ENCODE measurements at regions of chr6 and their contacts with region 1.

Region 1: DNA sequence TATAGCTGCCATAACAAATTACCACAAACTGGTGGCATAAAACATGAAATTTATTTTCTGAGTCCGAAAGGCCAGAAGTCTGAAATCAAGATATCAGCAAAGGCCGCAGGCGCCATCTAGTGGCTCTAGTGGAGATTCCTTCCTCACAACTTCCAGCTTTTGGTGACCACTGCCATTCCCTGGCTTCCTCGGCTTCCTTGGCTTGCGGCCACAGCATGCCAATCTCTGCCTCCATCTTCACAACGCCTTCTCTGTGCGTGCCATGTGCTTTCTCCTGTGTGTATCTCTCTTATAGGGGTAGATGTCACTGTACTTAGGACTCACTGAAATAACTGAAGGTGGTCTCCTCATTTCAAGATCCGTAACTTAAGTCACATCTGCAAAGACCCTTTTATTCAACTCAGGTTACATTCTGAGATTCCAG is 5.4 kb upstream of the PLAGL1 start:
- DNase-seq: peak; percentile 73
- H3K4me3 ChIP-seq: no peak overlapping the region
- H3K27ac ChIP-seq: no peak overlapping the region
- H3K4me1 ChIP-seq: no peaks in the 10 kb centered on the region
- H3K27me3 ChIP-seq: peaks cover 10% of the 10 kb centered on the region
- CTCF ChIP-seq: peak; percentile 96

Region 2: DNA sequence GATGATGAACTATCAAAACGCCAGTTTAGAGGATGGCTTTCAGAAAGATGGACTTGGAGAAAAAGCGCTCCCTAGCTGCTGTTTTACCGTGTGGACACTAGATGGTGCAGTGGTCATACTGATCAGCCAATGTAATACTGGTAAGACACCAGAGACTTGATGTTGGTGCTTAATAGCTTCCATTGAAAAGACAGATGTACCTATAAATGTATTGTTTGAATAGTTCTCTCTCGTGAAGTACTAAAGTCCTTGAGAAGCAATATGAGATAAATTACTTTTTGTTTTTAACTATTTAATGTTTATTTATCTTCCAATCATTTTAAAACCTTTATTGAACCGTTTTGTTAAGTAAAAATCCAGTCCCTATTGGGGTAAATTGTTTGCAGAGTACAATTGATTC is 438.1 kb before region 1 on chr6:
- intact Hi-C with region 1: loop called (anchors 5 kb)
- DNase-seq: no peak
- H3K4me3 ChIP-seq: no peak overlapping the region
- H3K27ac ChIP-seq: peak overlapping the region; percentile 24
- H3K4me1 ChIP-seq: peaks cover 5% of the 10 kb centered on the region
- H3K27me3 ChIP-seq: no peaks in the 10 kb centered on the region
- CTCF ChIP-seq: peak; percentile 94

Region 3: GRCh38 chr6:143940011-143940597 is 73.4 kb before region 1 on chr6:
- intact Hi-C with region 1: loop called (anchors 10 kb)
- DNase-seq: no peak
- H3K4me3 ChIP-seq: no peak overlapping the region
- H3K27ac ChIP-seq: no peak overlapping the region
- H3K4me1 ChIP-seq: no peaks in the 10 kb centered on the region
- H3K27me3 ChIP-seq: no peaks in the 10 kb centered on the region
- CTCF ChIP-seq: peak; percentile 69

Measured in left ventricle myocardium inferior (tissue), 1 donor.